WTC11 (cell line): ENCODE measurements at regions of chr6 and their contacts with region 1.

Region 1: DNA sequence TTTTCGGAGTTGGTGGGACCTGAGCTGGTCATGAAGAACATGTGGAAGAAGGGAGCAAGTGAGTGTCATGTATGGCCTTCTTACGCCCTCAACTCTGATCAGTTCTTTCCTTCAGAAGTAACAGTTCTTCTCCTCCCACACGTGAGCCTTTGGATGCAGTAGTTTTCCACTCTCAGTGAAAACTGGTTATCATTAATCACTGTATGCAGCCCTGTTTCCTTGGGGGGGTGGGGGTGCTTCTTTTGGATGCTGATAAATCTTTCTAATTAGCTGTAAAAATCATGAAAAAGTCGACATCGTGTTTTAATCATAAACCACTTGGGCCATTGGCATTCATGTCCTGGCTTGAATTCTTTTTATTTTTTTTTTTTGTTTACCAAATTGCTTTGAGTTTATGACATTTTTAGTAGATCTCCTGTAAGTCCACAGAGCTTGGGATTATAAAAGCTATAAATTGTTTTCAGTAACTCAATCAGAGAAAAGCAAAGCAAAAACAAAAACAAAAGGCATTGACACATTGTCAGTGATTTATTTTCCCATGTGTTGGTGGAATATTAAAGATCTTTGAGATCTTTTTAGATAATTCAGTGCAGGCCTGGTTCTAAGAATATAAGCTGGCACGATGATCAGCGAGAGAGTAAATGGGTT is 84.8 kb downstream of the TRMT11 start:
- DNase-seq: no peak
- ATAC-seq: no peak
- H3K4me3 Mint-ChIP-seq: no peak overlapping the region
- H3K27ac Mint-ChIP-seq: no peak overlapping the region
- H3K4me1 Mint-ChIP-seq: peaks cover 9% of the 10 kb centered on the region
- H3K27me3 Mint-ChIP-seq: no peaks in the 10 kb centered on the region
- CTCF ChIP-seq: no peak

Region 2: DNA sequence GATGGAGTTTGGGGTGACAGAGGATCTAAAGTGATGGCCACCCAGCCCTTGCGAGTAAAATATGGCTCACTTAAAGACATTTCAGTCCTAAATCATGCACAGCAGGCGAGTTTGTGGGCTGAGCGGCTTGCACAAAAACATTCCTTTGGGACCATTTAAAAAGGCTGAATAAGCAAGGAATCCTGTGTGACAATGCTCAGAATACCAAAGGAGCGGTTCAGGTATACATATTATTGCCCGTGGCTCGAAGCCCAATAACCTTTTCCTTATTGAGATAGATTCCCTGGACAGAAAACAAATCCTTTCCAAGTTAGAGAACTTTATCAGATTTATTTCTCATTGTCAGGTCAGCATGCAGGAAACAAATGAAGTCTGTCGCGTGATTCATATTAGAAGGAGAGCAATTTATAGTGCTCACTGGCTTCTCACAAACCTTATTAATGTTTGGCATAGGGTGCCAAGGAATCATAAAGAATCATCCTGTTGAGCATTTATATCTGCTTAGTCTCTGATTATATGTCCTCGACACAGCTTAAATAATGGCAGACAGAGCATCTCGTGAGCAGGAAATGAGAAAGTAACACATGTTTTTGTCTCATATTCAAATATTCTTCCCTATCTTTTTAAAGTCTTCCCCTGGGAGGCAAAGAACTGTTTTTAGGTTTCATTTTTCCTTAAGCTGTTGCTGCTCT is 36.5 kb after region 1 on chr6:
- CTCF ChIA-PET with region 1: no interaction called
- POLR2A ChIA-PET with region 1: interaction called, 10 read pairs
- DNase-seq: no peak
- ATAC-seq: peak; percentile 84
- H3K4me3 Mint-ChIP-seq: peak overlapping the region; percentile 16; the same call in 1 of the 2 replicates
- H3K27ac Mint-ChIP-seq: peak overlapping the region; percentile 69
- H3K4me1 Mint-ChIP-seq: peaks cover 35% of the 10 kb centered on the region
- H3K27me3 Mint-ChIP-seq: no peaks in the 10 kb centered on the region
- CTCF ChIP-seq: no peak